Heart left ventricle (tissue), 16 donors: ENCODE measurements at regions of chr16 and their contacts with region 1.

Region 1: GRCh38 chr16:60203525-60204124 is 1469.5 kb upstream of the GOT2 start:
- DNase-seq: no peak
- ATAC-seq: no peak
- H3K4me3 ChIP-seq: no peak overlapping the region
- H3K27ac ChIP-seq: no peak overlapping the region
- H3K4me1 ChIP-seq: peaks cover 0 to 4% (median 0%) of the 10 kb centered on the region in 12 donors
- H3K27me3 ChIP-seq: no peaks in the 10 kb centered on the region
- CTCF ChIP-seq: peak in 11 of 12 donors; percentile 7 to 59 (median 43)
- POLR2A ChIP-seq: no peak

Region 2: DNA sequence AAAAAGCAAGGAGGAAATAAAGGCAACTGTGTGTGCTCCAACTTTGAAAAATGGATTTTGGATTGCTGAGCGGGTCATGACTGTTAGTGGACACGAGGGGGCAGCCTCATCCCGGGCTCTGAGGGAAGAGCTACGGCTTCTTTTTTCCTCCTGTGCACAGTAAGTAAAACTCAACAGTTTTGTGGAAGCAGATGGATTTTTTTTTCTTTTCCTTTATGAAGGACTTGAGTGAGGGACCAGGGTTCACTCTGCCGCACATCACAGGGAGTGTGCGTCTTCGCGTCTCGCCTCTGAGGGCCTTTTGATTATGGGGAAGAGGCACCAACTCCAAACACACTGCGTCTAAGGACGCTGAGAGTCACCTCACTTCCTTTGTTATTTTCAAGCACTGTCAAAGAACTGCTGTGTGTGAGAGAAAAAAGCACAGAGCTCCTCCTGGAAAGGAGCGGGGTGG is 1389.2 kb before region 1 on chr16:
- intact Hi-C with region 1: loop called in 1 of 10 experiments (anchors 5 kb)
- DNase-seq: peak in 4 of 5 donors; percentile 22 to 34 (median 32)
- ATAC-seq: peak; percentile 65 to 90 (median 82)
- H3K4me3 ChIP-seq: peak overlapping the region in 9 of 12 donors; percentile 7 to 53 (median 39)
- H3K27ac ChIP-seq: no peak overlapping the region
- H3K4me1 ChIP-seq: peaks cover 0 to 11% (median 0%) of the 10 kb centered on the region in 12 donors
- H3K27me3 ChIP-seq: no peaks in the 10 kb centered on the region
- CTCF ChIP-seq: peak; percentile 75 to 88 (median 83)
- POLR2A ChIP-seq: no peak

Region 3: DNA sequence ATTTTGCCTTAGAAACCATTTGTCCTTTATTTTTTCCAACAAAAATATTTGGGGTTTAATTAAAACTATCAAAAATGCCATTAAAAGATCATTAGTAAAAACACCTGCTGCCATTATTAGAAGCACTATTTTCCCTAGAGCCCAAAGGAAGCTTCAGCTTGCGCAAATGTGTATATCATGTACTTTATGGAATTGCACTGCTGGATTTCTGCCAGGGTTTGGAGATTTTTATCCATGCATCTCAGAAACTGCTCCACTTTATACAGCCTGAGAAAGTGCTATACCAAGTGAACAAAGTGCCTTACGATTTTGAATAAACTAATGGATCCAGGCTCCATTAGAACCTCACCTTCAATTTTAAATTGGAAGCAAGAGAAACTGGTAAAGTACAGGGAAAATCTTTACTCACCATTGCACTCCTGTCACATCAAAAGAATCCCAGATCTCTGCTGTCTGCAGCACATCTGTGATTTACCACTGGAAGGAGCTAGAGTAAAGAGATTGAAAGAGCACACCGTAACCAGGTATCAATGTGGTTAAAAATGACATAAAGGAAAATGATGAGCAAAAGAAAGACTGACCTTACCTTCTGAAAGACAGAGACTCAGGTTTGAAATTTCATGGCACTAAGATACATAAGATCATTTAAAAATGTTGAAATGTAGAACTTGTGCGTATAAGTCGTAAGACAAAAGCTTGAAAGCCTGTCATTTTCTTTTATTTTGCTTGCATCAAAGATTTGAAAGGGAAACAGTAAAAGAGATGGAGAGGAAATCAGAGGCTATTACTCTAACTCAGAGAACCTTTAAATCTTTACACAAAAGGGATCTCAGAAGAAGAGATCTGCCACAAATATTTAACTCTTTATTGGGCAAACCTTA is 791.4 kb before region 1 on chr16:
- intact Hi-C with region 1: loop called in 1 of 10 experiments (anchors 10 kb)
- DNase-seq: no peak
- ATAC-seq: no peak
- H3K4me3 ChIP-seq: no peak overlapping the region
- H3K27ac ChIP-seq: no peak overlapping the region
- H3K4me1 ChIP-seq: no peaks in the 10 kb centered on the region
- H3K27me3 ChIP-seq: no peaks in the 10 kb centered on the region
- CTCF ChIP-seq: peak in 2 of 12 donors; percentile 18 to 29
- POLR2A ChIP-seq: no peak